Left ventricle myocardium superior (tissue), 1 donor: ENCODE measurements at regions of chr3 and their contacts with region 1.

Region 1: GRCh38 chr3:42012935-42013690 is 51.2 kb upstream of the ULK4 start:
- DNase-seq: peak; percentile 89
- ATAC-seq: peak; percentile 79

Region 2: DNA sequence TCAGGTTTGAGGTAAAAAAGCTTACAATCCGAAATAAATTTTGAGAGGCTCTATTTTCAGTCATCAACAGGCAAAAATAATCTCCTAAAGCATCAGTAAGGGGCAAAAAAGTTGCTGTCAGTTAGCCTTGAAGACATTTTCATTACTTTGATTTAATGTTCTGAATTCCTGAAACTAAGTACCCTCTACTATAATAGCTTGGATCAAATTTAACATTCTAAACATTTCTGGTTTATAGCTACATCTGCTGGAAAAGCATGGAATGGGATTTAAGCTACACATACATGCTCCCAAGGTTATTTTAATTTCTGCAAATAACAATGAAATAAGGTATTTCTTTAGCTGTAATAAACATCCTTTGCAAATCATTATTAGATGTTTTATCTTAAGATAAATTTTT is 296.6 kb before region 1 on chr3:
- intact Hi-C with region 1: no loop called
- DNase-seq: no peak
- ATAC-seq: no peak

Region 3: GRCh38 chr3:41768363-41768762 is 244.8 kb before region 1 on chr3:
- intact Hi-C with region 1: no loop called
- DNase-seq: no peak
- ATAC-seq: no peak

Region 4: GRCh38 chr3:42071904-42072592 is 58.9 kb after region 1 on chr3:
- intact Hi-C with region 1: no loop called
- DNase-seq: peak; percentile 88
- ATAC-seq: peak; percentile 79

Region 5: DNA sequence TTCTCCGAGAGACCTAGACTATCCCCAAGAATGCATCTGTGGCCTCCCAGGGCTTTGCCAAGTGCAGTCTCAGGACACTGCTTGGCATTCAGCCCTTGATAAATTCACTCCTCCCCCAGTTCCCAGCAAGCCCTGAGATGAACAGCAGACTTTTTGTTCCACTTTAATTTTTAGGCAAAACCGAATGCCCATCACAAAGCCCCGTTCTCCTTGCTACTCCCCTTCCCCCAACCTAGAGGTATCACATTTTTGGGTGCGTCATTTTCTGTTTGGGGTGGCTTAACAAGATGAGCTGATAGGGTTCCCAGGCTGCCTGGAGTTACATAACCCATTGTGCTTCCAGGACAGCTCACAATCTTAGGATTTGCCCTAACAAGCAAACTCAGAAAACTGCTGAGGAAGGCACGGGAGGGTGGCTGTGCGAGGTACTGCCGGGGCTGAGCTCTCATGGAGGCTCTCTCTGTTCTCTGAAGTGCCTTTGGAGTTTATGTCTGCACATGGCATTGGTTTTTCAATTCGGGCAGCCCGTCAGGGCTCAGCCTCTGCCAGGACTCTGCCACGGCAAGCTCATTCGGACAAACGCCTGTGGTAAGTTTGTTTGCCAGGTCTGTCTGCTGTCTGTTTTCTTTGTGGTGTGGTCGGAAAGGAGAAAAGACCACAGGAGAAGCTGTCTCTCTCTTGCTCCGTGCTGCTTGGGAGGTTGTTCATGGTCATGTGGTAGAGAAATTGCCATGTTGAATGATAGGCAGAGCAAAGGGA is 78.0 kb after region 1 on chr3 and contains the start of gene TRAK1:
- intact Hi-C with region 1: loop called (anchors 10 kb)
- DNase-seq: peak; percentile 62
- ATAC-seq: peak; percentile 83
- total RNA-seq, gene TRAK1: 323 TPM

Region 6: GRCh38 chr3:42179110-42179725 is 166.1 kb after region 1 on chr3:
- intact Hi-C with region 1: loop called (anchors 10 kb)
- DNase-seq: no peak
- ATAC-seq: peak; percentile 84